ENCODE measurements at regions of chr7 and their contacts with region 1.

Region 1: GRCh38 chr7:38335492-38336147 is 62.2 kb upstream of the TARP start:
- DNase-seq: peak; percentile 42 to 94 (median 88)
- ATAC-seq: peak; percentile 98
- H3K4me3 ChIP-seq: peak overlapping the region in 1 of 2 donors; percentile 28
- H3K27ac ChIP-seq: peak overlapping the region; percentile 45 to 91
- H3K4me1 ChIP-seq: peaks cover 0 to 46% of the 10 kb centered on the region in 2 donors
- H3K27me3 ChIP-seq: no peaks in the 10 kb centered on the region
- CTCF ChIP-seq: peak; percentile 85 to 97

Region 2: GRCh38 chr7:38222481-38223096 is 113.0 kb before region 1 on chr7:
- intact Hi-C with region 1: loop called in 1 of 2 experiments (anchors 10 kb)
- DNase-seq: peak in 2 of 4 donors; percentile 41 to 65
- ATAC-seq: peak; percentile 94
- H3K4me3 ChIP-seq: no peak overlapping the region
- H3K27ac ChIP-seq: peak overlapping the region in 1 of 2 donors; percentile 29
- H3K4me1 ChIP-seq: peaks cover 0 to 22% of the 10 kb centered on the region in 2 donors
- H3K27me3 ChIP-seq: no peaks in the 10 kb centered on the region
- CTCF ChIP-seq: peak; percentile 75 to 78

Region 3: DNA sequence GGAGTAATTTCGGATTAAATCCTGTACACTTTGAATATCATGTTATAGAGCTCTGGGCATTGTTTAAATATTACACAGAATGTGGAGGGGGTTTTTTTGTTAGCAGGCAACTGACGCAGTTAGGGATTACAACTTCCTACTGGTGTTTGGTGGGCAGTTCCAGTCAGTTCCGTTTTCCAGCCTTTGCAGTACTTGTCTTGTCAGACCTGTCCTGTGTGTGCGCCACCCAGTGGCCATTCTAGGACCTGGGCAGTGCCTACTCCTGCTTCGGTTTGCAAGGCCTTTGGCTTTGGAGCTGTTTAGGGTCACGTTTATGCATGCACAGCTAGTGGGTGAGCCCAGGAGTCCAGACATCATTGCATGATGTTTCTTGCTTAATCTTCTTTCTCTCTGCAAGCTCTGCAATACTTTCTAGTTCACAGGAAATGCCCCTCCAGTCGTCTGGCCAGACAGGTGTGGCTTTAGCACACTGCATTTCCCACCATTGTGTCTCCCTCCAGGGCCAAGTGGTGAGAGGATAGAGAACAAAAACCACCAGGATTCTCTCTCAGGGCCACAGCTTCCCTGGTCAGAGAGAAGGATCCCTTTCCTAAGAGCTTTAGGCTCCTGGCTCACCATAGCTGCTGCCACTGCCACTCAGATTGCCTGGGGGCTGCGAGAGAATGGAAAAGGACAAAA is 34.3 kb after region 1 on chr7:
- intact Hi-C with region 1: no loop called
- DNase-seq: peak; percentile 18 to 96 (median 84)
- ATAC-seq: peak; percentile 98
- H3K4me3 ChIP-seq: no peak overlapping the region
- H3K27ac ChIP-seq: peak overlapping the region in 1 of 2 donors; percentile 20
- H3K4me1 ChIP-seq: peaks cover 0 to 30% of the 10 kb centered on the region in 2 donors
- H3K27me3 ChIP-seq: no peaks in the 10 kb centered on the region
- CTCF ChIP-seq: peak; percentile 86 to 93

Measured in left lung (tissue), 14 donors.